ENCODE measurements at regions of chr5 and their contacts with region 1.

Region 1: GRCh38 chr5:41843456-41844370 is 26.5 kb downstream of the OXCT1 start:
- DNase-seq: no peak
- ATAC-seq: peak; percentile 89
- H3K4me3 ChIP-seq: no peak overlapping the region
- H3K27ac ChIP-seq: no peak overlapping the region; the same call in 1 of the 2 replicates
- H3K4me1 ChIP-seq: peaks cover 11% of the 10 kb centered on the region
- H3K27me3 ChIP-seq: no peaks in the 10 kb centered on the region
- CTCF ChIP-seq: peak; percentile 68 to 83 (median 73)
- EP300 ChIP-seq: no peak
- POLR2A ChIP-seq: no peak
- RAD21 ChIP-seq: peak; percentile 94

Region 2: GRCh38 chr5:40904205-40904993 is 939.3 kb before region 1 on chr5:
- CTCF ChIA-PET with region 1: interaction called, 4 read pairs
- POLR2A ChIA-PET with region 1: no interaction called
- RAD21 ChIA-PET with region 1: interaction called, 5 read pairs
- SMC1A ChIA-PET with region 1: interaction called, 4 read pairs
- in situ Hi-C with region 1: no loop called
- intact Hi-C with region 1: loop called (anchors 5 kb)
- DNase-seq: peak; percentile 15
- ATAC-seq: peak; percentile 99
- H3K4me3 ChIP-seq: no peak overlapping the region
- H3K27ac ChIP-seq: no peak overlapping the region
- H3K4me1 ChIP-seq: no peaks in the 10 kb centered on the region
- H3K27me3 ChIP-seq: no peaks in the 10 kb centered on the region
- CTCF ChIP-seq: peak; percentile 90 to 98 (median 98)
- EP300 ChIP-seq: no peak
- POLR2A ChIP-seq: no peak
- RAD21 ChIP-seq: peak; percentile 81

Region 3: DNA sequence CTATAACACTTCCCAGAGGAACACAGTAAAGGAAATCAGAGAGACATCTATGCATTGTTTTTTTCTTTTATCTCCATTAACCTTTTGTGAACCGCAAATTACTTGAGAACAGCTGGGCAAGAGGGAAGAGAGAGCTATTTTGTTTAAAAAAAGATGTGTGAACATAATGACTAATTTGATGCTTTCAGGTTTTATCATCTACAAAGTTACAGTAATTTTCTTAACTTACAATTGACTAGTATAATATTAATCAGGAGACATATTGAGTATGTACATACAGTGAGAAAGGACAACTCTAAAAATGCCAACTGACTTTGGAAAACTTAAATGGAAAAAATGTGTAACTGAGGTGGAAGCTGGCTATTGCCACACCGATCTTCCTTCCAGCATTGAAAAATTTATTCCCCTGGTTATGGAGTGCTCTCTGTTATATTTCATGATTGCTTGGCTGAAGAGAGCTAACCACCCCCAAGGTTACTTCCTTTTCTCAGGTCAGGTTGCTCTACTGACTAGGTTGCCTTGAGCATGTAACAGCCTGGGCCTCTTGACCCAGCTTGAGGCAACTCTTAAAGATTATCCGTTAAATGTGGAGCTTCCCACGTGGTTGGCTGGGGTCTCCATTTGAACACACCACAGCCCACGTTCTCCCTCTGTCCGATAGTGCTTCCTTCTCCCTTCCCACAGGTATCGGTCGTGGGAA is 567.8 kb before region 1 on chr5:
- CTCF ChIA-PET with region 1: no interaction called
- POLR2A ChIA-PET with region 1: no interaction called
- RAD21 ChIA-PET with region 1: interaction called, 11 read pairs
- SMC1A ChIA-PET with region 1: interaction called, 3 read pairs
- in situ Hi-C with region 1: loop called (anchors 25 kb)
- intact Hi-C with region 1: loop called (anchors 5 kb)
- DNase-seq: no peak
- ATAC-seq: peak; percentile 65
- H3K4me3 ChIP-seq: no peak overlapping the region
- H3K27ac ChIP-seq: no peak overlapping the region
- H3K4me1 ChIP-seq: no peaks in the 10 kb centered on the region
- H3K27me3 ChIP-seq: no peaks in the 10 kb centered on the region
- CTCF ChIP-seq: no peak
- EP300 ChIP-seq: no peak
- POLR2A ChIP-seq: no peak
- RAD21 ChIP-seq: no peak

Region 4: GRCh38 chr5:41707853-41708603 is 135.7 kb before region 1 on chr5:
- CTCF ChIA-PET with region 1: interaction called, 74 read pairs
- POLR2A ChIA-PET with region 1: no interaction called
- RAD21 ChIA-PET with region 1: interaction called, 13 read pairs
- SMC1A ChIA-PET with region 1: interaction called, 53 read pairs
- in situ Hi-C with region 1: no loop called
- intact Hi-C with region 1: loop called (anchors 1 kb)
- DNase-seq: no peak
- ATAC-seq: peak; percentile 91
- H3K4me3 ChIP-seq: no peak overlapping the region
- H3K27ac ChIP-seq: no peak overlapping the region
- H3K4me1 ChIP-seq: no peaks in the 10 kb centered on the region
- H3K27me3 ChIP-seq: no peaks in the 10 kb centered on the region
- CTCF ChIP-seq: peak; percentile 47 to 68 (median 53); a peak in 5 of 6 replicates
- EP300 ChIP-seq: no peak
- POLR2A ChIP-seq: no peak
- RAD21 ChIP-seq: peak; percentile 83

Region 5: DNA sequence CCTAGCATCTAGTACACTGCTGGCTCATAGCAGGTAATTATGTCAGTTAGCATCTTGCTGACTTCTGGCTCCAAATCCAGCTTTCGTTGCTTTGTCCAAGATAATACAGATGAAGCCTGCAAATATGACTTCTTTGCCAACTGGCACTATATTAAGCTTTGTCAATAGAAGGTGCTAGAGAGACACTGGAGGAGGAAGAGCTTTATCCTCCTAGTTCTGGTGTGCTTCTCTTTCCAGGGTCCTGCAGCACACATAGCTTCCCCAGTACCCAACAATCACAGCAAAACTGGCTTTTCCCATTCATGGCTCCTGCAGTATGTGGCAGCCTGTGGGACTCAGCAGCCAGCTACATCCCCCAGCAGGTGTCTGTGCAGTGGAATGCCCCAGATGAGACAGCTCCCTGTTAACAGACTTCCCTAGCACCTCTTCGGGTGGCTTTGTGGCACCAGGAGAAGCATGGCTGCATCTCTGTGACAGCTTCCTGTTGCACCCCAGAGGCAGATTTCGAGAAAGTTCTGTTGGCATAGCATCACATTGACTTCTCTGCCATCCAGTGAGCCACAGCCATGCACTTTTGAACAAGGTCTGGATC is 121.3 kb before region 1 on chr5:
- CTCF ChIA-PET with region 1: interaction called, 47 read pairs
- POLR2A ChIA-PET with region 1: interaction called, 3 read pairs
- RAD21 ChIA-PET with region 1: interaction called, 36 read pairs
- SMC1A ChIA-PET with region 1: interaction called, 57 read pairs
- in situ Hi-C with region 1: no loop called
- intact Hi-C with region 1: no loop called
- DNase-seq: no peak
- ATAC-seq: peak; percentile 59
- H3K4me3 ChIP-seq: no peak overlapping the region
- H3K27ac ChIP-seq: no peak overlapping the region
- H3K4me1 ChIP-seq: no peaks in the 10 kb centered on the region
- H3K27me3 ChIP-seq: no peaks in the 10 kb centered on the region
- CTCF ChIP-seq: peak; percentile 25 to 47 (median 31); a peak in 4 of 6 replicates
- EP300 ChIP-seq: no peak
- POLR2A ChIP-seq: no peak
- RAD21 ChIP-seq: peak; percentile 37; the same call in 1 of the 2 replicates

Region 6: DNA sequence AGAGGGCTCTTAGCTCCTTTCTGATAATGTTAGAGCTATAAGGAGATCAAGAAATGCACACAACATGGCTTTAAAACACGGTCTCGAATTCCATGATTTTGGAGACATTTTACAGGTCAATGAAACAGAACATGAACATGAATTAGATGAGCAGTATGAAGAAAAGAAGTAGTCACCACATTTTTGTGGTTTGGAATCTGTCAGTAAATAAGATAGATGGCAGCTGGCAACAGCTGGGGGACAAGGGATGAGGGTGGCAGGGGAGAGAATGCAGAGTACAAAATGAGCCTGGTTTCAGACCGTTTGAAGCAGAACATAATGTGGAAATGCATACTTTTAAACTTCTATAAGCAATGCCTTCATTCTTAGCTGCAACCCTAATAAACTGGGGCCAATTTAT is 80.6 kb before region 1 on chr5:
- CTCF ChIA-PET with region 1: interaction called, 28 read pairs
- POLR2A ChIA-PET with region 1: interaction called, 5 read pairs
- RAD21 ChIA-PET with region 1: interaction called, 46 read pairs
- SMC1A ChIA-PET with region 1: interaction called, 11 read pairs
- in situ Hi-C with region 1: no loop called
- intact Hi-C with region 1: loop called (anchors 5 kb)
- DNase-seq: no peak
- ATAC-seq: peak; percentile 56
- H3K4me3 ChIP-seq: no peak overlapping the region
- H3K27ac ChIP-seq: no peak overlapping the region
- H3K4me1 ChIP-seq: peaks cover 21% of the 10 kb centered on the region
- H3K27me3 ChIP-seq: no peaks in the 10 kb centered on the region
- CTCF ChIP-seq: no peak
- EP300 ChIP-seq: no peak; a peak in 1 of 4 replicates
- POLR2A ChIP-seq: no peak
- RAD21 ChIP-seq: no peak

Region 7: DNA sequence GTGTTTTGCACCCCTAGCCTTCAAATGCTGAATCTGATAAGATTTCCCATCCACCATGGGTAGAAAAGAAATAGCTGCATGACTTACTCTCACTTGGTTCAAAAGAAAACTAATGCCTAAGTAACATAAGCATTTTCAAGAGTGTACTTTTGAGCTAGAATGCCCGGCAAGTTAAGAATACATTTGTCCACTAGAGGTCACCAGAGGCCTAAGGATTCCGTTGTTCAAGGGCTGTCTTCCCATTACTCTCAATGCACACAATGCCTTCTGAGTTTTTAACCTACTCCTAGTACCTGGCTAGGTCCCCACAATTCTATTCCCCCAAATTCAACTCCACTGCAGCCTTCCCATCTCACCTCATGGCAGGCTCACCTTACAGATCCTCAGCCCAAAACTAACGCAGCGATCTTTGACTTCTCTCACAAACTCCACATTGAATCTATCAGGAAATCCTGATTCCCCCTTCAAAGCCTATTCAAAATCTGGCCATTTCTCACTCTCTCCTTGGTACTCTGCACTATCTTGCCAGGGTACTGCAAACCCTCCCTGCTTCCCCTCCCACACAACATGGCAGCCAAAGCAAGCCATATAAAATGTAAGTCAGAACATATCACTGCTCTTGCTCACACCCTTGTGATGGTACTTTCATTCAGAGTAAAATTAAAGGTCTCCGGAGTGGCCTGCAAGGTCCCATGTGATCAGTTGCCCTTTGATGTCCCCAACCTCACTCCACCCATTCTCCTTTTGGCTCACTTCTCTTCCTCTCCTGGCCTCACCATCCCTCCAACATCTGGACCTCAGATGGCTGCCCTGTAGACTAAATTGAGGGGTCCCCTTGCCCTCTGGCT is 13.2 kb after region 1 on chr5:
- CTCF ChIA-PET with region 1: interaction called, 18 read pairs
- POLR2A ChIA-PET with region 1: no interaction called
- RAD21 ChIA-PET with region 1: interaction called, 5 read pairs
- SMC1A ChIA-PET with region 1: interaction called, 6 read pairs
- in situ Hi-C with region 1: no loop called
- intact Hi-C with region 1: no loop called
- DNase-seq: no peak
- ATAC-seq: peak; percentile 98
- H3K4me3 ChIP-seq: no peak overlapping the region
- H3K27ac ChIP-seq: no peak overlapping the region
- H3K4me1 ChIP-seq: no peaks in the 10 kb centered on the region
- H3K27me3 ChIP-seq: no peaks in the 10 kb centered on the region
- CTCF ChIP-seq: peak; percentile 57 to 83 (median 75)
- EP300 ChIP-seq: no peak
- POLR2A ChIP-seq: no peak
- RAD21 ChIP-seq: peak; percentile 90

Region 8: GRCh38 chr5:42035526-42035925 is 191.8 kb after region 1 on chr5:
- CTCF ChIA-PET with region 1: no interaction called
- POLR2A ChIA-PET with region 1: no interaction called
- RAD21 ChIA-PET with region 1: no interaction called
- SMC1A ChIA-PET with region 1: no interaction called
- in situ Hi-C with region 1: no loop called
- intact Hi-C with region 1: no loop called
- DNase-seq: no peak
- ATAC-seq: no peak
- H3K4me3 ChIP-seq: no peak overlapping the region
- H3K27ac ChIP-seq: no peak overlapping the region
- H3K4me1 ChIP-seq: no peaks in the 10 kb centered on the region
- H3K27me3 ChIP-seq: no peaks in the 10 kb centered on the region
- CTCF ChIP-seq: no peak
- EP300 ChIP-seq: no peak
- POLR2A ChIP-seq: no peak
- RAD21 ChIP-seq: no peak

Measured in GM12878 (cell line).